Left lung (tissue), 14 donors: ENCODE measurements at regions of chr4 and their contacts with region 1.

Region 1: DNA sequence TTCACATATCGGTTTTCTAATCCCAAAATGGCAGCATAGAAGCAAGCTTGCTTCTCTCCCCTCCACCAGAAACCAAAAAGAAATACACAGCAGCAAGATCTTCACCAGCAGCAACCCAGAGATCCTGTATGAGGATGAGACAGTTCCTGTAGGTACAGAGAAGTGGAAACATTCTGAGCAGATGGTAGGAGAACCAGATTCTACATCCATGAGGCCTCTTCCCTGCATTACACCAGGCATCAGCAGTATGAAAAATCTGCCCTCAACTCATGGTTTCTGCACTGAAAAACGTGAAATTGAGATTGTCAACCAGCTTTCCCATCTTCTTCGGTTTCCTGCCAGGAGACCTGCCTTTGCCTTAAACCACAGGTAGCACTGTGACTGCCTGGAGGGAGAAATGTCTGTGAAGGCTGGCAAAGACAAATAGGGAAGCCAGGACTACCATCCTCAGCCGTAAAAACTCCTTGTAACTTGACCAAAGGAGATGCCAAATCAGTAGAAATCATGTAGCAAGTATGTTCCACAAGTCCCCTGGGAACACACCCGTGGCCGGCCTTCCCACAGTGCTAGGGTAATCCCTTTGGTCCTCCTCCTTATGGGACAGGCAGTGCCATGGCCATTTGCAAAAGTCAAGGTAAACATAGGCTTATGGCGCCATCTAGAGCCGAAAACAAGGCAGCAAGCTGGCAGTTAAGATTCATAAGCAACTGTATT is 24.0 kb upstream of the MTHFD2L start:
- DNase-seq: peak in 3 of 4 donors; percentile 61 to 79 (median 76)
- ATAC-seq: peak; percentile 99
- H3K4me3 ChIP-seq: no peak overlapping the region
- H3K27ac ChIP-seq: no peak overlapping the region
- H3K4me1 ChIP-seq: peaks cover 0 to 6% of the 10 kb centered on the region in 2 donors
- H3K27me3 ChIP-seq: no peaks in the 10 kb centered on the region
- CTCF ChIP-seq: peak; percentile 64 to 78

Region 2: GRCh38 chr4:73583666-73584065 is 550.3 kb before region 1 on chr4:
- intact Hi-C with region 1: loop called in 1 of 2 experiments (anchors 5 kb)
- DNase-seq: no peak
- ATAC-seq: no peak
- H3K4me3 ChIP-seq: no peak overlapping the region
- H3K27ac ChIP-seq: no peak overlapping the region
- H3K4me1 ChIP-seq: no peaks in the 10 kb centered on the region
- H3K27me3 ChIP-seq: no peaks in the 10 kb centered on the region
- CTCF ChIP-seq: no peak

Region 3: GRCh38 chr4:73662709-73663546 is 471.0 kb before region 1 on chr4:
- intact Hi-C with region 1: loop called in 1 of 2 experiments (anchors 5 kb)
- DNase-seq: peak in 2 of 4 donors; percentile 15 to 48
- ATAC-seq: peak; percentile 93
- H3K4me3 ChIP-seq: no peak overlapping the region
- H3K27ac ChIP-seq: no peak overlapping the region
- H3K4me1 ChIP-seq: peaks cover 0 to 21% of the 10 kb centered on the region in 2 donors
- H3K27me3 ChIP-seq: no peaks in the 10 kb centered on the region
- CTCF ChIP-seq: peak; percentile 31 to 42

Region 4: DNA sequence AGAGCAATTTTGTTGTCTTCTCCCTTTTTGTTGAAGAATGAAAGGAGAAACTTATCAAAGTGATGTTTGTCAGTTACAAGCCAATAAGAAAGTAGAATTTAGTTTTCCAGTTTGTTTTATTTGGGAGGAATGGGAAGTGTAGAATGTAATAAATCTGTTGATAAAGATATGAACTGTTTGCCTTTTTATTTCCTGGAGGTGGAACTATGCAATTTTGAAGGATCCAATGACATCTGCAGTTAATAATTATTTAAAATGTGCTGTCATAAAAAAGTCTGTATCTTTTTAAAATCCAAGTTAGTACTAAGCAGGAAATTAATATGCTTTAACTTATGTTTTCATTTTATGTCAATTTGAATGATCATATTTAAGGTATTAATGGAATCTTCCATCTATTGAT is 197.0 kb before region 1 on chr4:
- intact Hi-C with region 1: no loop called
- DNase-seq: no peak
- ATAC-seq: no peak
- H3K4me3 ChIP-seq: no peak overlapping the region
- H3K27ac ChIP-seq: no peak overlapping the region
- H3K4me1 ChIP-seq: no peaks in the 10 kb centered on the region
- H3K27me3 ChIP-seq: peaks cover 0 to 3% of the 10 kb centered on the region in 2 donors
- CTCF ChIP-seq: no peak